ENCODE measurements at regions of chr4 and their contacts with region 1.

Region 1: DNA sequence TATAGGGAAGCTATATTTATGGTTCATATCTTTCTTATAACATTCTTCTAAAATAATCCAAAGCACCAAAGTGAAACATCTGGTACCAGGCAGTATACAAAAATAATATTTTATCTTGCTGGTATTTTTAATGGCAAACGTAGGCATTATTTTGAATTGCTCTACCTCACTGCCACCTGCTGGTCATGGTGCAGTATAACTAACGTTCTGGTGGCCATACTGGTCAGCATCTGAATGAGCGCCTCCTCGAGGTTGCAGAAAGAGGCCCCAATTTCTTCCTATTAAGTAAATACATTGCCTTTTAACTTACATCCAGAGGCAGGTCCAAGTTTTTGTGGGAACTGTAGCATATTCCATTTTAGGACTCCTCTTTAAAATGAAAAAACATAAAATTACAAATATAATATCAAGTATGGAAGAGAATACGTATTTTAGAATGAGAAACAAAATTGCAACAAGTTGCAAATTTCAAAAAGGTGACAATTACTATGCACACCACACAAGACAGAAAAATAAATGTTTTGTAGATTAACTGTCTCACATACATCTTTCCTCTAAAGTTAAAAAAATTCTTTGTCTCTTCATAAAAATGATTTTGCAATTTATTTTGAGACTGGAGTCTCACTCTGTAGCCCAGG is 22.9 kb upstream of the CWH43 start:
- DNase-seq: peak; percentile 22
- ATAC-seq: peak; percentile 92
- H3K4me3 Mint-ChIP-seq: no peak overlapping the region
- H3K27ac Mint-ChIP-seq: no peak overlapping the region
- H3K4me1 Mint-ChIP-seq: no peaks in the 10 kb centered on the region
- H3K27me3 Mint-ChIP-seq: peaks cover 6% of the 10 kb centered on the region
- CTCF ChIP-seq: peak; percentile 94

Region 2: DNA sequence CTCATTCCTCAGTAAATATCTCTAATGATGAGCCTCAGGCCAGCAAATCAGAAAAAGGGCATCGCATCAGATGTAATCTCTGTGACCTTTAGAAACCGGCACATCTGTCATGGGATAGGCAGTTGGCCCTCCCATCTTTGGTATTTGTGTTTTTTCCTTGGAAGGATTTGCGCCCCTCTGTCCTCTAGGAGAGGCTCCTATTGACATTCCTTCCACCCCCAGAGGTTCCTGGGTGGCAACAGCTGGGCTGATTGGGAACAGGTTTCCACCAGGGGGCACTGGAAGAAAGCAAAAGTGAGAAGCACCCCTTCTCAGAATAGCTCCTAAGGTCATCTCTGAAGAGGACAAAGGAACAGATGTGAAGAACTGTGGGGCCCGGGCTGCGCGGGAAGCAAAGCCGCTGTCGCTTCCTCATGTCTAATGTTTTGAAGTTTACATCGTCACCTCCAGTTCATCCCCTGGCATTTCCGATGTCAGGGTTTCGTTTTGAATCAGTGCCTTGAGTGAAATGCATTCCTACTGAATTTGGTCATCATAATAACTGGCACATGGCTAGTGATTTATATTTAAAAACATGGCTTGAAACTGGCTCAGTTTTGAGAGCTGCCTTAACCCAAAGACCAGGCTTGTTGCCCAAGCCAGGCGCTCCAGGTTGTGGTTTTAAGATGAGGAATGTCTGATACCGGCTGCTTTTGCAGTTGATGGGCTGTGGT is 835.3 kb before region 1 on chr4:
- CTCF ChIA-PET with region 1: no interaction called
- POLR2A ChIA-PET with region 1: no interaction called
- intact Hi-C with region 1: loop called (anchors 10 kb)
- DNase-seq: peak; percentile 19
- ATAC-seq: peak; percentile 74
- H3K4me3 Mint-ChIP-seq: peak overlapping the region; percentile 2
- H3K27ac Mint-ChIP-seq: no peak overlapping the region
- H3K4me1 Mint-ChIP-seq: peaks cover 10% of the 10 kb centered on the region
- H3K27me3 Mint-ChIP-seq: no peaks in the 10 kb centered on the region
- CTCF ChIP-seq: no peak

Region 3: DNA sequence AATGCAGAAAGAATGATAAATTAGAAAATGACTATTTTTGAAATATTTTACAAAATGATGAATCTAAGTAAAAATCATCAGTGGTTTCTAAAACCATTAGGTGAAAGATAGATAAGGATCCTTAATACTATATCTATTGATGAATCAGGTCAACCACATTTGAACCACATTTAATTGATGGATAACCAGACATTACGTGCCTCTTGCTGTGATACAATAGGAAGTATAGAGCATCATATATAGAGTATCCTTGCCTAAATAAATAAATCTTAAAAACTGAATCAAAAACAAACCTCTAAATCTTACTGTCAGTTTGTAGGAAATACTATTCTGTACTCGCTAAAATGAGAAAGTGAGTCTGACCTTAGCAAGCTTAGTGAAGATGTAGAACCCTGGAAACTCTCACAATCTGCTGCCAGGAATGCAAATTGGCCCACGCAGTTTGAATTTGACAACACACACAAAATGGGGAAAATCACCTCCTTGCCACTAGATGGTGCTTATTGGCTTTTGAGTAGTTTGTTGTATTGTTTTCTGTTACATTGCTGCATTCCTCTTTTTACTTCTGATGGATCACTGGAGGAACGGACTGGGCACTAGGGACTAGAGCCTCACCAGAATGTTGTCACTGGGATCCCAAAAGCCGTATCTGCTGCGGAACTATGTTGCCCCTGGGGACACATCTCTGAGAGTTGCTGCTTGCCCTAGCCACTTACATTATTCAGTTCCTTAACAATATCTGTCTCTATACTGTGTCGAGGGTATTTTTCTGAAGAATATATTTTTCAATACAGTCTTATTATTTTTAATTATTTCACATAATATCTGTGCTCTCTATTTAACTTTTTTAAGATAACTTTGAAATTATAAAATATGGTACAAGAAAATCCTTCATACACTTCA is 647.2 kb before region 1 on chr4:
- CTCF ChIA-PET with region 1: no interaction called
- POLR2A ChIA-PET with region 1: no interaction called
- intact Hi-C with region 1: loop called (anchors 2 kb)
- DNase-seq: no peak
- ATAC-seq: peak; percentile 28
- H3K4me3 Mint-ChIP-seq: no peak overlapping the region
- H3K27ac Mint-ChIP-seq: no peak overlapping the region
- H3K4me1 Mint-ChIP-seq: no peaks in the 10 kb centered on the region
- H3K27me3 Mint-ChIP-seq: no peaks in the 10 kb centered on the region
- CTCF ChIP-seq: no peak

Region 4: DNA sequence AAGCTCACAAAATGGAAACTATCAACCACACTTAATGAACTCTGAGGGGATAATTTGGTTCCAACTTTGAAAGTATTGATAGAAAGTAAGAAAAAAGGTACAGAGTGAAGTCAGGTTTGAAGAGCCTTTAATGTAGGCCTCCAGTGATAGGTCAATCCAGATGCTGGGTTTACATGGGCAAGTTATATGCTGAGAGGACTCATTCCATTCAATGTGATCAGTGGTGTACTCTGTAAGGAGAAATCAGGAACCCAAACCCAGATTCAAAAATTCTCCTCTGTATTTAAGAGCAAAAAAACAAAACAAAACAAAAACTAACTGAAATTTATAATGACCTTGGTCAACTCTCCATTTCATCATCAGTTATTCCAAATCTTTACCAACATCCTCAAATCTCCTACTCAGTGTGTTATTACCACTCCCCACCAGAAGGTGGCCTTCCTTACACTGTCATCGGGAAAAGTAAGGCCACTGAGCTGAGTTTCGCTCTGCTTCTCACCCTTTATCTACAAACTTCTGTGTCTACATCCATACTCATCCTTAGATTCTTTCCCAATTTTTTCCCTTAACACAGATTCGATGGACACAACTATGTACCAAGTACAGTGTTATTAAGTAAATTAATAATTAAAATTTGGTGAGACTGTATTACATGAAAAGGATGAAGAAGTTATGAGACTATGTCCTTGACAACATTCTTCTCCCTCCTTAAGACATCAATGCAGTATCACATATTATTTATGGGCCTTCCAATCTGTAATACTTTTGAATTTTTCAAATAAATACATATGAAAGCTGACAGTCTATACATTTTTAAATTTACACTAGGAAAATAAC is 384.8 kb before region 1 on chr4:
- CTCF ChIA-PET with region 1: interaction called, 48 read pairs
- POLR2A ChIA-PET with region 1: no interaction called
- intact Hi-C with region 1: loop called (anchors 1 kb)
- DNase-seq: no peak
- ATAC-seq: peak; percentile 83
- H3K4me3 Mint-ChIP-seq: no peak overlapping the region
- H3K27ac Mint-ChIP-seq: no peak overlapping the region
- H3K4me1 Mint-ChIP-seq: no peaks in the 10 kb centered on the region
- H3K27me3 Mint-ChIP-seq: no peaks in the 10 kb centered on the region
- CTCF ChIP-seq: peak; percentile 34

Region 5: DNA sequence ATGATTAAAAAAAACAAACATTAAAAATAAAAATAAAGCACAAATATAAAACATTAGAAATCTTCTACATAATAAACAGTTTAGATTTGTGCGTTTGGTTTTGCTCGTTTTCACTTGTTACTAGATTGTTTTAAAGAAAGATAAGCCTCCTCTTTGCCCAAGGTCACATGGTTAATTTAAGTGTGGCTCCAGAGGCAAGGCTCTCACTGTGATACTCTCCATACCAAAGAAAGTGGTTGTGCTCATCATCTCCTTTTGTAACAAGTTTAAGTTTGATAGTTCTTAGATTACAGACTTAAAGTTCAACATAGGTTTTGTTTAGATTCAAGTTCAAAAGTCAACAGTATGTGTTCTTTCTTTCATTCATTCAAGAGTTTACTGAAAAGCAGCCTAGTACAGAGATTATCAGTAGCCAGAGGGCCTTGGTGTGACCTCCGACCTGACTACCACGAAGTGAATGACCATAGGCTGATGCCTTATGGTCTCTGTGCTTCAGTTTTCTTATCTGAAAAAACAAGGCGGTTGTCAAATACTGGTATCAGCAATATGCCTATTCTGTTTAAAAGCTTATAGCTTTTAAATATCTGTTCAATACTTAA is 339.9 kb before region 1 on chr4:
- CTCF ChIA-PET with region 1: no interaction called
- POLR2A ChIA-PET with region 1: no interaction called
- intact Hi-C with region 1: loop called (anchors 5 kb)
- DNase-seq: no peak
- ATAC-seq: no peak
- H3K4me3 Mint-ChIP-seq: no peak overlapping the region
- H3K27ac Mint-ChIP-seq: no peak overlapping the region
- H3K4me1 Mint-ChIP-seq: no peaks in the 10 kb centered on the region
- H3K27me3 Mint-ChIP-seq: no peaks in the 10 kb centered on the region
- CTCF ChIP-seq: no peak

Region 6: GRCh38 chr4:48681856-48682255 is 281.3 kb before region 1 on chr4:
- CTCF ChIA-PET with region 1: no interaction called
- POLR2A ChIA-PET with region 1: no interaction called
- intact Hi-C with region 1: loop called (anchors 10 kb)
- DNase-seq: no peak
- ATAC-seq: peak; percentile 84
- H3K4me3 Mint-ChIP-seq: peak overlapping the region; percentile 24
- H3K27ac Mint-ChIP-seq: peak overlapping the region; percentile 78
- H3K4me1 Mint-ChIP-seq: peaks cover 44% of the 10 kb centered on the region
- H3K27me3 Mint-ChIP-seq: no peaks in the 10 kb centered on the region
- CTCF ChIP-seq: no peak

Region 7: GRCh38 chr4:48877827-48878533 is 85.2 kb before region 1 on chr4:
- CTCF ChIA-PET with region 1: no interaction called
- POLR2A ChIA-PET with region 1: no interaction called
- intact Hi-C with region 1: no loop called
- DNase-seq: no peak
- ATAC-seq: no peak
- H3K4me3 Mint-ChIP-seq: no peak overlapping the region
- H3K27ac Mint-ChIP-seq: no peak overlapping the region
- H3K4me1 Mint-ChIP-seq: no peaks in the 10 kb centered on the region
- H3K27me3 Mint-ChIP-seq: no peaks in the 10 kb centered on the region
- CTCF ChIP-seq: no peak

Region 8: GRCh38 chr4:48906206-48907173 is 56.7 kb before region 1 on chr4 and contains the start of gene OCIAD2:
- CTCF ChIA-PET with region 1: no interaction called
- POLR2A ChIA-PET with region 1: no interaction called
- intact Hi-C with region 1: loop called (anchors 2 kb)
- DNase-seq: peak; percentile 65
- ATAC-seq: peak; percentile 97
- H3K4me3 Mint-ChIP-seq: peak within 1 kb of the TSS; percentile 97
- H3K27ac Mint-ChIP-seq: peak within 1 kb of the TSS; percentile 86
- H3K4me1 Mint-ChIP-seq: peaks cover 29% of the 10 kb centered on the region
- H3K27me3 Mint-ChIP-seq: no peaks in the 10 kb centered on the region
- CTCF ChIP-seq: no peak
- total RNA-seq, gene OCIAD2: 37.0 and 38.3 TPM in 2 replicates